Activated CD8-positive, alpha-beta T cell treated with anti-CD3 and anti-CD28 coated beads for 36 hours (primary cell): ENCODE measurements at regions of chr4 and their contacts with region 1.

Region 1: DNA sequence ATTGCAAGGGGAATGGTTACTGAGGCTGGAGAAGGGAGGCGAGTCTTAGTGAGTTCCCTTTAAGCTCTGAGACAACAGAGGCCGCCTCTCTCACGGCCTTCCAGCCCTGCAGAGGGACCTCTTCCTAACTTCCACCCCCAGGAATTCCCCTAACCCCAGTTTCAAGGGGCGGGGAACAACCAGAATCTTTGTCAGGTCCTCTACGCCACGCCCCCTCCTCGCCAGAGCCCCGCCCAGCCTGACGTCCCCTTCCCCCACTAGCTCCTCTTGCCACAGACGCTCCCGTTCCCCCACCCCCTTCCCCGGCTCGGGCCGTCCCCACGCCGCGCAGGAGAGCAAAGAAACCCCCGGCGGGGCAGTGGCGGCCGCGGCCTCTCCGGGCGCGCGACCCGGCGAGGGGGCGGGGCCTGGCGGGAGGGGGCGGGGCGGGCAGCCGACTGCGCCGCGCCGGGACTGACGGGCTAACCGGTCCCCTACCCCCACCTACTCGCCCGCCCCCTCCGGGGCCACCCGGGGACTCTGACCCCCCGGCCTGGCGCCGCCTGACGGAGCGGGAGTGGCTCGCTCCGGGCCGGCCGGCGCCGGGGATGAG is 12.3 kb upstream of the TMEM156 start:
- DNase-seq: peak; percentile 97
- ATAC-seq: peak; percentile 90
- H3K4me3 Mint-ChIP-seq: peak overlapping the region; percentile 84
- H3K27ac Mint-ChIP-seq: peak overlapping the region; percentile 77
- H3K4me1 Mint-ChIP-seq: peaks cover 46% of the 10 kb centered on the region
- H3K27me3 Mint-ChIP-seq: no peaks in the 10 kb centered on the region
- CTCF ChIP-seq: no peak

Region 2: GRCh38 chr4:39446751-39447573 is 402.5 kb after region 1 on chr4:
- CTCF ChIA-PET with region 1: no interaction called
- POLR2A ChIA-PET with region 1: no interaction called
- intact Hi-C with region 1: loop called (anchors 10 kb)
- DNase-seq: peak; percentile 75
- ATAC-seq: peak; percentile 88
- H3K4me3 Mint-ChIP-seq: peak overlapping the region; percentile 49
- H3K27ac Mint-ChIP-seq: peak overlapping the region; percentile 11
- H3K4me1 Mint-ChIP-seq: peaks cover 28% of the 10 kb centered on the region
- H3K27me3 Mint-ChIP-seq: no peaks in the 10 kb centered on the region
- CTCF ChIP-seq: no peak